ENCODE measurements at regions of chr4 and their contacts with region 1.

Region 1: DNA sequence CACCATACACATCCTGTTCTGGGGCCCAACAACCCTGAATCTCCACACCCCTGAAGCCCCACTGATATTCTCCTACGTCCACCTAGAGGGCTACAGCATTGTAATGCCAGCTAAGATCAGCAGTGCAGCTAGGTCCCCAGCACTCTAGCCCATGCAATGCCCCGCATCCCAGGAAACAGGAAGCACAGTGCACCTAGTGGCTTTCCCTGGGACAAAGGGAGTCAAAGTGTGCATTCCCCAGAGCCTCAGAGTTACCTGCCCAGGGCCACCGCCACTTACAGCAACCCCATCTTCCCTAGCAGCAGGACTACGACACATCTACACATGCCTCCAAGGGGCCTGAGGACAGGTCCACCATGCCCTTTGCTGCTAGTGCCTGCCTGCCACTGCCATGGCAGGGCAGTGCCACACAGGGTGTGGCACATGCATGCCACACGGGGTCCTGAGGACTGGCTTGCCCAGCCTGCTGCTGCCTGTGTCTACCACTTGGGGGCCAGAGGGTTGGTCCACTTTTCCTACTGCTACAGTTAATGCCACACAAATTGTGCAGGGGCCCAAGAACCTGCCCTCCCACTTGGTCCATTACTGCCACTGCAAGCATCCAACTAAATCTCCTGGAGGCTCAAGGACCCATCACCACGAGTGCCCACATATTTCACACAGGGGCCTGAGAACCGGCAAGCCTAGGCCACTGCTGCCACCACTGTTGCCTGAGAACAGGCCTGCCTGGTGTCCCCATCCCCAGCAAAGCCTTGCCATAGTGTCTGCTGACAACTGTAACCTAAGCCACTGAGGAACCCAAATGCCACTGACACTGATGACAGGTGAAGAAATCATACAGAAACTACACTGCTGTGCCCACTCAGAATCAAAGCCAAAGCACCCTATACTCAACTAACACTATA is 23.7 kb downstream of the TLR6 start:
- DNase-seq: no peak
- ATAC-seq: peak; percentile 71
- H3K4me3 ChIP-seq: no peak overlapping the region
- H3K27ac ChIP-seq: no peak overlapping the region
- H3K4me1 ChIP-seq: no peaks in the 10 kb centered on the region
- H3K27me3 ChIP-seq: no peaks in the 10 kb centered on the region
- CTCF ChIP-seq: peak in 2 of 3 experiments; percentile 25; a peak in 2 of 6 replicates
- EP300 ChIP-seq: no peak
- POLR2A ChIP-seq: no peak
- RAD21 ChIP-seq: no peak

Region 2: GRCh38 chr4:38818441-38818976 is 14.4 kb before region 1 on chr4:
- CTCF ChIA-PET with region 1: interaction called, 9 read pairs
- POLR2A ChIA-PET with region 1: interaction called, 5 read pairs
- RAD21 ChIA-PET with region 1: interaction called, 4 read pairs
- SMC1A ChIA-PET with region 1: interaction called, 26 read pairs
- in situ Hi-C with region 1: no loop called
- intact Hi-C with region 1: no loop called
- DNase-seq: peak; percentile 81
- ATAC-seq: peak; percentile 76
- H3K4me3 ChIP-seq: no peak overlapping the region
- H3K27ac ChIP-seq: peak overlapping the region; percentile 96
- H3K4me1 ChIP-seq: peaks cover 40% of the 10 kb centered on the region
- H3K27me3 ChIP-seq: no peaks in the 10 kb centered on the region
- CTCF ChIP-seq: no peak
- EP300 ChIP-seq: peak; percentile 94 to 96; a peak in 3 of 4 replicates
- POLR2A ChIP-seq: no peak; the same call in 1 of the 2 replicates
- RAD21 ChIP-seq: no peak

Region 3: DNA sequence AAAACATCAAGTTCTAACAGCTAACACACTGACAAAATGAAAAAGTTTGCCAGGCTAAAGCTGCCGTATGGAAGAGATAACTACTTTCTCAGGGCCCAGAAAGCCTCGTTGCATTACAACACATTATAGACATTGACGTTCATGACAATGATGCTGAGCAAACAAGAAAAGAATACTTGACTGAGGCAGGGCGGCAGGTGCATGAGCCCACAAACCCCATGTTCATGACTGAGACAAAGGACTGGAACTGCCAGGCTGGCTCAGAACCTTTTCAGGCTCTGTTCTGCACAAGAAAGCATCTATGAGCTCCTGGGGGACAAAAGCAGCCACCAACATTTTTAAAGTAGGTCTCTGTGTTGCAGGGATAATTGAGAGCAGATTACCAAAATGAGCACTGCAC is 10.1 kb after region 1 on chr4:
- CTCF ChIA-PET with region 1: interaction called, 4 read pairs
- POLR2A ChIA-PET with region 1: interaction called, 10 read pairs
- RAD21 ChIA-PET with region 1: no interaction called
- SMC1A ChIA-PET with region 1: interaction called, 4 read pairs
- in situ Hi-C with region 1: no loop called
- intact Hi-C with region 1: no loop called
- DNase-seq: no peak
- ATAC-seq: no peak
- H3K4me3 ChIP-seq: no peak overlapping the region
- H3K27ac ChIP-seq: no peak overlapping the region
- H3K4me1 ChIP-seq: no peaks in the 10 kb centered on the region
- H3K27me3 ChIP-seq: no peaks in the 10 kb centered on the region
- CTCF ChIP-seq: no peak
- EP300 ChIP-seq: no peak
- POLR2A ChIP-seq: no peak
- RAD21 ChIP-seq: no peak

Measured in GM12878 (cell line).